Heart right ventricle (tissue), 16 donors: ENCODE measurements at regions of chr11 and their contacts with region 1.

Region 1: GRCh38 chr11:107457558-107458271 is at the start of gene CWF19L2:
- DNase-seq: peak; percentile 87 to 91
- ATAC-seq: peak; percentile 98 to 100 (median 99)
- H3K4me3 ChIP-seq: peak within 1 kb of the TSS; percentile 46 to 96 (median 76)
- H3K27ac ChIP-seq: peak within 1 kb of the TSS; percentile 51 to 85 (median 76)
- H3K4me1 ChIP-seq: peaks cover 5 to 21% (median 18%) of the 10 kb centered on the region in 9 donors
- H3K27me3 ChIP-seq: no peaks in the 10 kb centered on the region
- CTCF ChIP-seq: peak in 2 of 9 donors; percentile 27 to 42
- total RNA-seq, gene CWF19L2: 6.5 to 11.7 (median 8.0) TPM

Region 2: GRCh38 chr11:107157146-107157808 is 300.4 kb before region 1 on chr11:
- intact Hi-C with region 1: no loop called
- DNase-seq: no peak
- ATAC-seq: no peak
- H3K4me3 ChIP-seq: no peak overlapping the region
- H3K27ac ChIP-seq: no peak overlapping the region
- H3K4me1 ChIP-seq: no peaks in the 10 kb centered on the region
- H3K27me3 ChIP-seq: no peaks in the 10 kb centered on the region
- CTCF ChIP-seq: no peak

Region 3: GRCh38 chr11:107263844-107264563 is 193.7 kb before region 1 on chr11:
- intact Hi-C with region 1: no loop called
- DNase-seq: no peak
- ATAC-seq: no peak
- H3K4me3 ChIP-seq: no peak overlapping the region
- H3K27ac ChIP-seq: no peak overlapping the region
- H3K4me1 ChIP-seq: no peaks in the 10 kb centered on the region
- H3K27me3 ChIP-seq: no peaks in the 10 kb centered on the region
- CTCF ChIP-seq: no peak

Region 4: GRCh38 chr11:107385361-107385982 is 72.2 kb before region 1 on chr11:
- intact Hi-C with region 1: no loop called
- DNase-seq: no peak
- ATAC-seq: no peak
- H3K4me3 ChIP-seq: no peak overlapping the region
- H3K27ac ChIP-seq: no peak overlapping the region
- H3K4me1 ChIP-seq: no peaks in the 10 kb centered on the region
- H3K27me3 ChIP-seq: no peaks in the 10 kb centered on the region
- CTCF ChIP-seq: no peak

Region 5: DNA sequence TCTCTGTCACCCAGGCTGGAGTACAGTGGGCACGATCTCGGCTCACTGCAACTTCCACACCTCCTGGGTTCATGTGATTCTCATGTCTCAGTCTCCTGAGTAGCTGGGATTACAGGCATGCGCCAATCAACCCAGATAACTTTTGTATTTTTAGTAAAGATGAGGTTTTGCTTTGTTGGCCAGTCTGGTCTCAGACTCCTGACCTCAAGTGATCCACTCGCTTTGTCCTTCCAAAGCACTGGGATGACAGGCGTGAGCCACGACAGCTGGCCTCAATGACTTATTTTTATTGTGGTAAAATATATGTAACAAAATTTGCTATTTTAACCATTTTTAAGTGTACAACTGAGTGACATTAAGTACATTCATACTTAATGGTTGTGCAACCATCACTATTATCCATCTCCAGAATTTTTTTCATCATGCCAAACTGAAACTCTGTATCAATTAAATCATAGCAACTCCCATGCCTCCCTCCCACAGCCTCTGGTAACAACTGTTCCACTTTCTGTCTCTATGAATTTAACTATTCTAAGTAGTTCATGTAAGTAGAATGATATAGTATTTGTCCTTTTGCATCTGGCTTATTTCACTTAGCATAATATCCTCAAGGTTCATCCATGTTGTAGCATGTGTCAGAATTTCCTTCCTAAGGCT is 50.6 kb after region 1 on chr11:
- intact Hi-C with region 1: no loop called
- DNase-seq: no peak
- ATAC-seq: no peak
- H3K4me3 ChIP-seq: no peak overlapping the region
- H3K27ac ChIP-seq: no peak overlapping the region
- H3K4me1 ChIP-seq: peaks cover 0 to 6% (median 0%) of the 10 kb centered on the region in 9 donors
- H3K27me3 ChIP-seq: no peaks in the 10 kb centered on the region
- CTCF ChIP-seq: no peak

Region 6: DNA sequence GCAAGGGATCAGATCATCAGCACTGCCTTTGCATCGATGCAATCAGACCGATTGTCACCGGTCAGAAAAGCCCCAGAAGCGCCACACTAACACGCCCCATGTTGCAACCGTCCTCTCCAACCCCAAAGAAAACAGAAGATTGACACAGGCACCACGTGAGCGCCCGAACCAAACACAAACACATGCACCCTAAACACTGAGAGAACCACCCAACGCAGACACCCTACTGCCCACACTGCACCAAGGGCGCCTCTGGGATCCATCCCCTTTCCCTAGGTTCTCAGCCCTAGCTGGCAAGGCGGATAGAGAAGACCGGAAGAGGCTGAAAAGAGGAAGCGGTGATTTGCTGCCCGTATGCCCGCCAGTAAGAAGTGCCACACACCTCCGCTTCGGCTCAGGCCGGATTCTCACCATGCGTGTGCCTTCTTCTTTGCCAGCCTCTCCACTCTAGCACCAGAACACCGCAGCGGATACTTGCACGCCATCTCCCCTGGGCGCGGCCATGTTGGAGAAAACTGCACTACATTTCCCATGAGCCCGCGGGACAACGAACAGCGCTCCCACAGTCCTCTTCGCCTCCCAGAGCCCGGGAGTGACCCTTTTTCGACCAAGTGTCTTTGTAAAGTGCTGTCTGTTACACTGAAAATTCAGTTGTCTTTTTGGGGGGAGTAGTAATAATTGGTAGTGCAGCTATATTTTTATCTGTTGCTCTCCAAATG is 107.7 kb after region 1 on chr11 and contains the start of gene ALKBH8:
- intact Hi-C with region 1: loop called in 1 of 10 experiments (anchors 10 kb)
- DNase-seq: peak; percentile 72 to 81
- ATAC-seq: peak; percentile 96 to 98 (median 96)
- H3K4me3 ChIP-seq: peak within 1 kb of the TSS; percentile 60 to 98 (median 88)
- H3K27ac ChIP-seq: peak within 1 kb of the TSS in 9 of 10 donors; percentile 72 to 91 (median 80)
- H3K4me1 ChIP-seq: peaks cover 0 to 34% (median 25%) of the 10 kb centered on the region in 9 donors
- H3K27me3 ChIP-seq: peaks cover 0 to 13% (median 5%) of the 10 kb centered on the region in 7 donors
- CTCF ChIP-seq: no peak
- total RNA-seq, gene ALKBH8: 5.4 to 7.8 (median 6.8) TPM